AG04449 (cell line): ENCODE measurements at regions of chr18 and their contacts with region 1.

Region 1: DNA sequence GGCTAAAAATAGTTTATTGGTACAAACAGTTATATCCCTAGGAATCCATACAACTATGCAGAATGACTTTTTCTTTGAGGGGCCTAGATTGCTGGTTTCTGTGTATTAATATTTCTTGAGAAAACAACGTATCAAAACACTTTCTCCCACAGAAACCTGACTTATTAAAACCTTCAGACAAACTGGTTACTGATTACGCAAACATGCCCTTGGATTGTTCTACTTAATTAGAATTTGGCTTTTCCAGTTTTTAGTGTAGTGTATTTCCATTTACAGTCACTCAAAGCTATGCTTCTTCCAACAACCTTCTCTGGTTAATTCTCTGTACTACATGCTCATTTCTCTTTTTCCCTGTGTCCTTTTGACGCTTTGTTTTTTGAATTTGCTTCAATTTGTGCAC is 20.0 kb downstream of the VAPA start:
- DNase-seq: no peak
- H3K4me3 ChIP-seq: no peak overlapping the region
- CTCF ChIP-seq: no peak

Region 2: DNA sequence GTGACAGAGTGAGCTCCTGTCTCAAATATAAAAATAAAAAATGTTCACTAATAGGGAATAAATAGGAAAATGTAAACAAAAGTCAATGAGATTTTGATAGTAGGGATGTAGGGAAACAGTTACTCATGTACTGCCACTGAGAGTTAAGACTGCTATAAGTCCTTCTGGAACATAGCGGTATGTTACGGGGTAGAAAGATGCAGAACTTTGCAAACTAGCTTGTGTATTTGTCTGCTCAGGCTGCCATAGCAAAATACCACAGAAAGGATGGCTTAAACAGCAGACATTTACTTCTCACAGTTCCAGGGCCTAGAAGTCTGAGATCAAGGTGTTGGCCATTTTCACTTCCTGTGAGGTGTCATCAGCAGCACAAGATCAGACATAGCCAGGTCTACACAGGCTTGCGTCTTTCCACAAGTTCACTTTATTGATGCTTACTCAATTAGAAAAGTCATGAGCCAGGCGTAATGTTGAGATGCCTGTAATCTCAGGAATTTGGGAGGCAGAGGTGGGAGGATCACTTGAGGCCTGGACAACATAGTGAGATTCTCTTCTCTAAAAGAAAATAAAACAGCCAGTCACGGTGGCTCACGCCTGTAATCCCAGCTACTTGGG is 39.3 kb before region 1 on chr18:
- CTCF ChIA-PET with region 1: no interaction called
- POLR2A ChIA-PET with region 1: no interaction called
- DNase-seq: no peak
- H3K4me3 ChIP-seq: no peak overlapping the region
- CTCF ChIP-seq: no peak

Region 3: GRCh38 chr18:9951022-9951859 is 17.4 kb after region 1 on chr18:
- CTCF ChIA-PET with region 1: interaction called, 11 read pairs
- POLR2A ChIA-PET with region 1: no interaction called
- DNase-seq: no peak
- H3K4me3 ChIP-seq: no peak overlapping the region
- CTCF ChIP-seq: peak; percentile 69